ENCODE measurements at regions of chr11 and their contacts with region 1.

Region 1: GRCh38 chr11:74170694-74171629 is at the starts of genes C2CD3 and PPME1:
- DNase-seq: peak; percentile 99
- H3K4me3 Mint-ChIP-seq: no peak within 1 kb of the TSS
- H3K27ac Mint-ChIP-seq: no peak within 1 kb of the TSS
- H3K4me1 Mint-ChIP-seq: peaks cover 6% of the 10 kb centered on the region
- H3K27me3 Mint-ChIP-seq: no peaks in the 10 kb centered on the region
- CTCF ChIP-seq: peak; percentile 29
- total RNA-seq, gene C2CD3: 18.7 and 23.2 TPM in 2 replicates
- total RNA-seq, gene PPME1: 36.3 and 38.1 TPM in 2 replicates

Region 2: DNA sequence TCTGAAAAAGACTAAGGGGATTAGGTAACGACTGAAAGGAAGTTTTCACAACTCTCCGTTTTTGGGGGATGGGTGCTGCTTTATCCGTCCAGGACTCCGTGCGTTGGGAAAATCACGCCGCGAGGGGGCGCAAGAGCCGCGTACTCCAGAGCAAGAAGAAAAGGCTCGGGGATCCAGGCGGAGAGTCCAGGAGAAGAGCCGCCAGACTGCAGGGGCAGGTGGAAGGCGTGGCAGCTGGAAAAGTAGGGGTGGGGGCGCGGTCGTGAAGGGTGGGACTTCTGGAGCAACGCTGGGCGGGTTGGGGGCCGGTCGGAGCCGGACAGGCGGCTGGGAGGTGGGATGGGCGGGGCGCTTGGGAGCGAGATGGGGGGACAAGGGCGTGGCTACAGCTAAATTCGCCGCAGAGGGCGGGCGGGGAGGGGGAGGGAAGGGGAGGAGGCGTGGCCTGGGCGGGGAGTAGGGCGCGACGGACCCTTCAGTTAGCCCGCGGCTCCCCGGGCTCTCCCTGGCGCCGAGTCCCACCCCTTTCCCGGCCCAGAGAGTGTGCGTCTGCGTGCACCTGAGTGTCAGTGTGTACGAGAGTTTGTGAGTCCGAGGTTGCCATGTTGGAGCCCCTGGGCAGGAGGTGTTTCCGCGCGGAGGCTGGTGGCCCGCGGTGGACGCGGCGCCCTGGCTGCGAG is 863.5 kb before region 1 on chr11:
- CTCF ChIA-PET with region 1: no interaction called
- POLR2A ChIA-PET with region 1: no interaction called
- intact Hi-C with region 1: no loop called
- DNase-seq: peak; percentile 97
- H3K4me3 Mint-ChIP-seq: peak overlapping the region; percentile 73
- H3K27ac Mint-ChIP-seq: peak overlapping the region; percentile 6
- H3K4me1 Mint-ChIP-seq: peaks cover 21% of the 10 kb centered on the region
- H3K27me3 Mint-ChIP-seq: no peaks in the 10 kb centered on the region
- CTCF ChIP-seq: peak; percentile 80

Region 3: DNA sequence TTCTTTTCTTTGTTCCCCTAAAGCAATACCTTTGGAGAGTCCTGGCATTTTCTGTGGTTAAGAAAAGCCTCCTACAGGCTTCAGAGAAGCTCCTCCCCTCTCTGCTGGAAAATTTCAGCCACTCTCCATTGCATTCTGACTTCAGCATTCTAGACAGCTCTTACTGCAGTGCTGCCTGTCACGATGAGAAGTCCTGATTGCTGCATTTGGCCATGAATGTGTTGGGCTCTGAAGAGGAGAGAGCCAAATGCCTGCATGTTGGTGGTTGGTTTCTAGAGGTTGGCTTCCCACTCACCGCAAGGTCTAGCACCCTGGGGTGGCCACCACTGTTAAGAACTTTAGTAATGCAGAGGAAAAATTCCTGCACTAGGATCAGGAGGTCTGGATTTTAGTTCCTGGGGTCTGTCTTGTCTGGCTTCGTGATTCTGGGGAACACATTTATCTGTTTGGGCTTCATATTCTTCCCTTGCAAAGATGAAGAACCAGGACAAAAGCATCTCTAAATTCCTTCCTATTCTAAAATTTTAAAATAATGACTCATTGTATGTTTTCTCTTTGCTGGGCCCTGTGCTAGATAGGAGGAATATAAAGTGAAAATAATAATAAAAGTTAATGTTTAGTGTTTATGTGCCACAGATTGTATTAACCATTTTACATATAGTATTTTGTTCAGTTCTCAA is 332.4 kb before region 1 on chr11:
- CTCF ChIA-PET with region 1: no interaction called
- POLR2A ChIA-PET with region 1: no interaction called
- intact Hi-C with region 1: no loop called
- DNase-seq: no peak
- H3K4me3 Mint-ChIP-seq: no peak overlapping the region
- H3K27ac Mint-ChIP-seq: no peak overlapping the region
- H3K4me1 Mint-ChIP-seq: no peaks in the 10 kb centered on the region
- H3K27me3 Mint-ChIP-seq: no peaks in the 10 kb centered on the region
- CTCF ChIP-seq: no peak

Region 4: GRCh38 chr11:73965076-73965860 is 205.7 kb before region 1 on chr11:
- CTCF ChIA-PET with region 1: interaction called, 3 read pairs
- POLR2A ChIA-PET with region 1: interaction called, 3 read pairs
- intact Hi-C with region 1: loop called (anchors 1 kb)
- DNase-seq: no peak
- H3K4me3 Mint-ChIP-seq: no peak overlapping the region
- H3K27ac Mint-ChIP-seq: no peak overlapping the region
- H3K4me1 Mint-ChIP-seq: peaks cover 7% of the 10 kb centered on the region
- H3K27me3 Mint-ChIP-seq: peaks cover 8% of the 10 kb centered on the region
- CTCF ChIP-seq: no peak

Region 5: DNA sequence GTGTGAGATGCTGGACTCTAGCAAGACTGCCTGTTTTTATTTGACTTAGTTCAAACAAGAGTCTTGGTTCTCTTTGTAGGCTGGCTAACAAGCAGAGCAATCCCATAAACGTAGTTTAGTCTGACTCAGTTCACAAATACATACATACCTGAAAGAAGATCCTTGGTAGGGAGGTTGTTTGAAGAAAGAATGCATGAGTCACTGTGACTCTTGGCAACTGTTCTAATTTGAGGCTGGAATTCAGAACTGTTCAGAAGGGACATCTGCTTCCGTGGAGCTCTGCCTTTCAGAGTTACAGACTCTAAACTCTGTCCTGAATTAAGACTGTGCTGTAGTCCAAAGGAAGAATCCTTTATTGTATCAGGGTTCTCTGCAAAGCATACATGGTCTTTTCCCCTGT is 32.4 kb before region 1 on chr11:
- CTCF ChIA-PET with region 1: interaction called, 13 read pairs
- POLR2A ChIA-PET with region 1: interaction called, 41 read pairs
- intact Hi-C with region 1: loop called (anchors 1 kb)
- DNase-seq: peak; percentile 95
- H3K4me3 Mint-ChIP-seq: peak overlapping the region; percentile 45
- H3K27ac Mint-ChIP-seq: peak overlapping the region; percentile 95
- H3K4me1 Mint-ChIP-seq: peaks cover 45% of the 10 kb centered on the region
- H3K27me3 Mint-ChIP-seq: no peaks in the 10 kb centered on the region
- CTCF ChIP-seq: no peak

Region 6: GRCh38 chr11:74147199-74147929 is 23.6 kb before region 1 on chr11:
- CTCF ChIA-PET with region 1: interaction called, 3 read pairs
- POLR2A ChIA-PET with region 1: interaction called, 19 read pairs
- intact Hi-C with region 1: no loop called
- DNase-seq: no peak
- H3K4me3 Mint-ChIP-seq: no peak overlapping the region
- H3K27ac Mint-ChIP-seq: no peak overlapping the region
- H3K4me1 Mint-ChIP-seq: peaks cover 18% of the 10 kb centered on the region
- H3K27me3 Mint-ChIP-seq: no peaks in the 10 kb centered on the region
- CTCF ChIP-seq: no peak

Region 7: GRCh38 chr11:74157169-74157568 is 13.8 kb before region 1 on chr11:
- CTCF ChIA-PET with region 1: interaction called, 9 read pairs
- POLR2A ChIA-PET with region 1: interaction called, 17 read pairs
- intact Hi-C with region 1: no loop called
- DNase-seq: no peak
- H3K4me3 Mint-ChIP-seq: no peak overlapping the region
- H3K27ac Mint-ChIP-seq: peak overlapping the region; percentile 46
- H3K4me1 Mint-ChIP-seq: peaks cover 19% of the 10 kb centered on the region
- H3K27me3 Mint-ChIP-seq: no peaks in the 10 kb centered on the region
- CTCF ChIP-seq: no peak

Region 8: DNA sequence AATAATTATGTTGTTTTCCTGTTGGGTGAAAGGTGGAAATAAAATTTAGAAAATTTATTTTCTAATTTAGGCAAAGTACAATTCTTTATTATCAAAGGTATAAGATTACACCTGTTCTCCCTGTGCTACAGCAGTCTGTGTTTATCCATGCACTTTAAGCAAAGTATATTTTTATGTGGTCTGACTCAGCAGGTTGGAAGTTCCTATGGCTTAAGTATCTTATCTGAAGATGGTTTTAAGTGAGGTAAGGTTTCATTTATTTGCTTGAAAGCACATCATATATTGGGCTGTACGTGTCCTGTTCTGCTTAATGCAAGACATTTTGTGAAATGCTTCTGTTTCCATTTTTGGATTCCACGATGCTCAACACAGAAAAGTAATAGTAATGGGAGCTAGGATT is 14.7 kb after region 1 on chr11:
- CTCF ChIA-PET with region 1: interaction called, 3 read pairs
- POLR2A ChIA-PET with region 1: interaction called, 34 read pairs
- intact Hi-C with region 1: no loop called
- DNase-seq: no peak
- H3K4me3 Mint-ChIP-seq: no peak overlapping the region
- H3K27ac Mint-ChIP-seq: peak overlapping the region; percentile 74
- H3K4me1 Mint-ChIP-seq: peaks cover 6% of the 10 kb centered on the region
- H3K27me3 Mint-ChIP-seq: no peaks in the 10 kb centered on the region
- CTCF ChIP-seq: no peak